Activated CD4-positive, alpha-beta T cell treated with anti-CD3 and anti-CD28 coated beads for 36 hours (primary cell): ENCODE measurements at regions of chr1 and their contacts with region 1.

Region 1: DNA sequence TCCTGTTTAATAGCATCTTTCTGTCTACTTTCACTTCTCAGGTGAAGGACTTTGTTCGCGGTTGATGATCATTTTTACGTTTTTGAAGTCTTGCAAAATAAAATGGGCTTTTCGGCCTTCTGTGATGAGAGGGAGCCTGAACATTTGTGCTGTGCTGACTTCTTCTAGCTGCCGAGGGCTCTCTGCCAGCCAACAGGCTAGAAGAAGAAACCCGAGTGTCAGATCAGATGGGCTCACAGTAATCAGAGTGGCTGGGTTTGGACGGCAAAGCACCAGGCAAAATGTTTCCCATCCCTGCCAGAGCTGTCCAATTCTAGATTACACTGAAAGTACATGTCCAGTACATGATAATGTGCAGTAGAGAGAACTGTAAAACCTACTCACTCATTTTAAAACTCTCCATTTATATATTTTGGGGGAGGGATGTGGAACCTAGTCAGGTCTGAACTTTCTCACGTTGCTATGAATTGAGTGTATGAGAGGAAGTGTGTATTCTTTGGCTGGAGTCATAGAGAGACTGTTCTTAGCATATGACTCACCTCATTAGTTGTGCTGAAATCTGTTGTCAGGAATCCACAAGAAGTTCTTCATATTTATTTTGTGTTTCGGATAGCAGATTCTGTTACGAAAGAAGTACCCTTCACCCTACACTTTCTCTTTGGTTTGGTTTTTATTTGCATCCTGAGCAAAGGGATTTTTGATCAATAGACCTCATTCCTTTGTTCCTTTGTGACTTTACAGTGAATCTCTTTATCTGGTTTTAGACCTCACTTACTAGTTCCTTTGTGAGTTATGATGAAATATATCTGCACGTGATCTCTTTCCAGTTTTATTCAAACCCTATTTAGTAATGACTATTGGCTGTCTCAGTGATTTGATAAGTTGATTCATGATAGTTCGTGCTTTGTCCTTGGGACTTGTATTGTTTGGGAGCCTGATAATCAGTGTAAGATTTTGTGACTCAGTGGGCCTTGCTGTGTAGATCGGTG is 4.8 kb downstream of the ATP1A1 start:
- DNase-seq: peak; percentile 58
- ATAC-seq: peak; percentile 74
- H3K4me3 Mint-ChIP-seq: peak overlapping the region; percentile 93
- H3K27ac Mint-ChIP-seq: peak overlapping the region; percentile 92
- H3K4me1 Mint-ChIP-seq: peaks cover 73% of the 10 kb centered on the region
- H3K27me3 Mint-ChIP-seq: no peaks in the 10 kb centered on the region

Region 2: GRCh38 chr1:114757455-114758250 is 1620.2 kb before region 1 on chr1 and contains the start of gene CSDE1:
- CTCF ChIA-PET with region 1: no interaction called
- POLR2A ChIA-PET with region 1: no interaction called
- intact Hi-C with region 1: loop called in 1 of 2 experiments (anchors 5 kb)
- DNase-seq: peak; percentile 98
- ATAC-seq: peak; percentile 87
- H3K4me3 Mint-ChIP-seq: peak within 1 kb of the TSS; percentile 99
- H3K27ac Mint-ChIP-seq: peak within 1 kb of the TSS; percentile 99
- H3K4me1 Mint-ChIP-seq: peaks cover 53% of the 10 kb centered on the region
- H3K27me3 Mint-ChIP-seq: no peaks in the 10 kb centered on the region
- total RNA-seq, gene CSDE1: 458 to 553 TPM

Region 3: GRCh38 chr1:116352349-116352813 is 25.5 kb before region 1 on chr1:
- CTCF ChIA-PET with region 1: interaction called, 4 read pairs
- POLR2A ChIA-PET with region 1: no interaction called
- intact Hi-C with region 1: loop called (anchors 1 kb)
- DNase-seq: peak; percentile 47
- ATAC-seq: peak; percentile 80
- H3K4me3 Mint-ChIP-seq: peak overlapping the region; percentile 27
- H3K27ac Mint-ChIP-seq: peak overlapping the region; percentile 29
- H3K4me1 Mint-ChIP-seq: peaks cover 52% of the 10 kb centered on the region
- H3K27me3 Mint-ChIP-seq: no peaks in the 10 kb centered on the region

Region 4: GRCh38 chr1:116485071-116485735 is 107.4 kb after region 1 on chr1:
- CTCF ChIA-PET with region 1: interaction called, 14 read pairs
- POLR2A ChIA-PET with region 1: no interaction called
- intact Hi-C with region 1: no loop called
- DNase-seq: peak; percentile 94
- ATAC-seq: peak; percentile 93
- H3K4me3 Mint-ChIP-seq: no peak overlapping the region
- H3K27ac Mint-ChIP-seq: no peak overlapping the region
- H3K4me1 Mint-ChIP-seq: peaks cover 5% of the 10 kb centered on the region
- H3K27me3 Mint-ChIP-seq: no peaks in the 10 kb centered on the region

Region 5: DNA sequence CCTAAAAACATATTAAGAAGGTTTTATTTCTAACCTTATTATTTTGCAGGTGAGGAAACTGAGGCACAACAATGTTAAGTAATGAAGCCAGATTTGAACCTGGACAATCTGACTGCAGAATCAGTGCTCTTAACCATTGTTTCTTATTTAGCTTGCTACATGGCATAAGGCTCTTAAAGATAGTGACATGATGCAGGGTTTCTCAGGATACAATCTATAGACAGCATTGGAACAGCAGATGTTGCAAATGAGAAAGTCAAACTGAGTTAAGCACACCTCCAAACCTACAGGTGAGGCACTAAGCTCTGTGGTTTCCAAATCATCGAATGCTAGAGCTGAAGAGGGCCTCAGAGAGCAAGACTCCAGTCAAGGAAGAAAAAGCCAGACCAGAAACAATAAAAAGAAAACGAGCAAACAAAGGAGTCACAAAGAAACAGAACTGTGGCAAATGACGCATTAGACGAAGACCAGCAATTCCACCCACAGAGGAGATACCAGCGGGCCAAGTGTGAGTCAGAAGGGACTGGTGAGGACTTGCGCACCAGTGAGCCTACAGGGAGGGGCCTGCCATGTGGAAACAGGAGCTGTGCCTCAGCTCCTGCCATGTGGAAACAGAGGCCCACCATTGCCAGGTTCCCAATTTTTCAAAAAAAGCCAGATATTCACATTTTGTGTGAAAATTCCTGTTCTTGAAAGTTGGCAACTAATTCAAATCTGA is 178.6 kb after region 1 on chr1:
- CTCF ChIA-PET with region 1: no interaction called
- POLR2A ChIA-PET with region 1: no interaction called
- intact Hi-C with region 1: loop called (anchors 1 to 5 kb)
- DNase-seq: peak; percentile 88
- ATAC-seq: peak; percentile 92
- H3K4me3 Mint-ChIP-seq: no peak overlapping the region
- H3K27ac Mint-ChIP-seq: peak overlapping the region; percentile 87
- H3K4me1 Mint-ChIP-seq: peaks cover 73% of the 10 kb centered on the region
- H3K27me3 Mint-ChIP-seq: no peaks in the 10 kb centered on the region

Region 6: GRCh38 chr1:116769561-116769977 is 391.7 kb after region 1 on chr1:
- CTCF ChIA-PET with region 1: no interaction called
- POLR2A ChIA-PET with region 1: interaction called, 3 read pairs
- intact Hi-C with region 1: loop called (anchors 5 kb)
- DNase-seq: peak; percentile 86
- ATAC-seq: peak; percentile 53
- H3K4me3 Mint-ChIP-seq: peak overlapping the region; percentile 93
- H3K27ac Mint-ChIP-seq: peak overlapping the region; percentile 100
- H3K4me1 Mint-ChIP-seq: peaks cover 96% of the 10 kb centered on the region
- H3K27me3 Mint-ChIP-seq: no peaks in the 10 kb centered on the region

Region 7: GRCh38 chr1:117077267-117077666 is 699.4 kb after region 1 on chr1:
- CTCF ChIA-PET with region 1: no interaction called
- POLR2A ChIA-PET with region 1: no interaction called
- intact Hi-C with region 1: loop called in 1 of 2 experiments (anchors 5 kb)
- DNase-seq: peak; percentile 78
- ATAC-seq: peak; percentile 99
- H3K4me3 Mint-ChIP-seq: no peak overlapping the region
- H3K27ac Mint-ChIP-seq: peak overlapping the region; percentile 86
- H3K4me1 Mint-ChIP-seq: peaks cover 40% of the 10 kb centered on the region
- H3K27me3 Mint-ChIP-seq: no peaks in the 10 kb centered on the region